ENCODE measurements at regions of chr17 and their contacts with region 1.

Region 1: DNA sequence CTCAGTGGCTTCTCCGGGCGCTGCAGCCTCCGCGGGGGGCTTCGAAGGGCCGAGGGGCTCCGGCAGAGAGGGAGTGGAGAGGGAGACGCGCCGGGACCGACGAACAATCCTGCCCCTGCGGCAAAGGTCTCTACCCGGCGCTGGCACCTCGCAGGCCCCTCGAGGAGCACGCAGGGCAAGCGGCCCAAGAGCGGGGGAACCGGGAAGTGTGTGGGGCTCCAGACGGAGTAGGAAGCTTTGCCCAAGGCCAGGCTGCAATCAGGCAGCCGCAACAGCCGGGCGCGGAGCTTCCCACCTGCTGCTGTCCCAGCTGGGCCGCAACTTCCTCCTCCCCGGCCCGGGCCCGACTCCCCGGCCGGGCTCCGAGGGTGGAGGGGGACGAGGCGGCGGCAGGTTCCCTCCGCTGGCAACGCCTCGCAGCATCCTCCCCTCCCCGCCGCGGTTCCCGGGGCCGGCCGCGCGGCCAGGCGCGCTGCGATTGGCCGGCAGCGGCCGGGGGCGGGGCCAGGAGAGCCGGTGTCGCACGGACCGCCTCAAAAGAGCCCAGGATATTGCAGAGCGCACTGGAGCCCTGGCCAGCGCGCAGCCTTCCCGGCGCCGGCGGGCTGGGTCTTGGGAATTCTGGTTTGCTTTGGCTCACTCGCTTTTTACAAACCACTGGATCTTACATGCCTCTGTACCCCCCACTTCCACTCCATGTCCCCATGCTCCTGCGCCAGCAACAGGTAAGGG is at the start of gene KCNJ2:
- DNase-seq: peak; percentile 95
- ATAC-seq: peak; percentile 90
- total RNA-seq, gene KCNJ2: 50.6 TPM

Region 2: DNA sequence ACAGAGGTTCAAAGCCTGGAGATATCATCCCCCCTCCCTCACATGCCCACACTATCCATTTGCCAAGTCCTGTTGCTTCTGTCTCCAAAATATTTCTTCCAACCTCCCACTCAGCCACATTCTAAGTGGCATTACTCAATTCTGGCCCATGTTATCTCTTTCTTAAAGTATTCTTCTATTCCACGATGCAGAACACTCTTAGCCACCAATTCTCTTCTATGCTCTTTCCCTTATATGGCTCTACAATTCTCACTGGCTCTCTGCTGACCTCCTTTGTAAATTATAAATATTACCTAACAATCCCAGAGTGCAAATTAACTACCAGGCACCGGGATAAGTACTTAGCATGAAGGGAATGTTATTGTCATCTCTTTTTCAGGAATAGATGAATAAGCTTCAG is 82.6 kb after region 1 on chr17:
- intact Hi-C with region 1: no loop called
- DNase-seq: no peak
- ATAC-seq: no peak

Region 3: GRCh38 chr17:70295731-70296130 is 126.6 kb after region 1 on chr17:
- intact Hi-C with region 1: loop called (anchors 10 kb)
- DNase-seq: no peak
- ATAC-seq: peak; percentile 97

Region 4: DNA sequence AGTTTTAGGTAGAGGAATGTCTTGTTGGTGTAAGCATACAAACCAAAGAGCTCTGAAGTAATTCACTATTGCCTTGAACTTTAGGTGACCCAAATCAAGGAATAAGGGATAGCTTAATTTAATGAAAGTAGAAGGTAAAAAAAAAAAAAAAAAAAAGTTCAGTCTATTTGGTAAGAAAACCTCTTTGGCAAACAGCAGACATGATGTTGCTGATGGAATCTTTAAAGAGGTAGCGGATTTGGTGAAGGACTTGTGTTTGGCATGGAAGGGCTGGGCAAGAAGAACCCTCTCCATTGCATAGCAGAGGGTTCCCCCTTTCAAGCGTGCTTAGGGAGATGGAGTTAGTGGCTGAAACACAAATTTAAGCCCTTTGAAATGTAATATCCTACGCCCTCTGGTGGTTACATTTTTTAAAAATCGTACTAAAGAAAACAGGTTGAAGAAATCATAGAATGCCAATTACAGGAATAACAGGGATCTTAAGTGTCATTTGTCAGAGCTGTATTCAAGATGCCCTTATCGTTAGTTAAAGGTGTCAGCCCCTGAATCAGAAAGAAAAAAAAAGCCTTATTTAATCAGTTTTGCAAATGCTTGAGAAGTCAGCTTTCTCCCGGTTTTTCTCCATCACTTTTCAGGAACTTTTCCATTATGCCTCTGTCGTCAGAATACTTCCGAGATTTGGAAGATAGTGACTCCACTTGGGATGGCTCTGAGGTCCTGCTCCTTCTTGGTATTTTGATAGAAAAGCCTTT is 383.3 kb after region 1 on chr17:
- intact Hi-C with region 1: loop called (anchors 10 kb)
- DNase-seq: no peak
- ATAC-seq: peak; percentile 86

Measured in left ventricle myocardium superior (tissue), 1 donor.